Activated CD4-positive, alpha-beta memory T cell treated with anti-CD3 and anti-CD28 coated beads for 36 hours (primary cell): ENCODE measurements at regions of chr14 and their contacts with region 1.

Region 1: DNA sequence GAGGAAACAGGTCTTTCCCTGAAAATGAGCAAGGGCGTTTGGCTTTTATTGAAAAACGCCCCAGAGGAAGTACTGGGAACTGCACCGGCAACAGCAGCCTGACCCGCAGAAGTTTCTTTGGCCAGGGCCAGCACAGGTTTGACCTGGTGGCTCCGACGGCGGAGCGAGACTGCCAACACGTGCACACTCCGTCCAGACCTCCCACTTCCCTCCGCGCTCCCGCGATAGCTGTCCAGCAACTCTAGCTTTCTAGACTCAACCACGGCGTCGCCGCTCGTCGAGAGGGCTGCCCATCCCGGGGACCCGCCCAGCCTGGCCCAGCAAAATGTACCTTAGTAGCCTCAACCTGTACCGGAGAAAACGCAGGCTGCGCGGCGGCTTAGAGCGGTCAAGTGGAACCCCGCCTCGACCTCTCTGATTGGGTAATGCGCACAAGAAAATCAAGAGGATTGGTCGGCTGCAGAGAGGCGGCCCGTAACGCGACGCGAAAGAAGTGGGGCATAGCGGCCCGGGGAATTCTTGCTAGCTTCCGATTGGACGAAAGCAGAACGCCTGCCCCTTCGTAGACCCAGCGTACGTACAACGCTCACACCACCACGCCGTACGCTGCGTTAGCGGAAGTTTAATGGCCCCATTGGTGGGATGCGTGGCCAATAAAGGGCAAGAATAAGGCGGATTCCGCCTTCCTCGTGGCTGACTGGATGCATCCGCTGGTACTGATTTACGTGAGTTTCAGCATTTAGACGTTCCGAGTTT is at the start of gene WDR89:
- DNase-seq: peak; percentile 98
- H3K4me3 Mint-ChIP-seq: peak within 1 kb of the TSS; percentile 74
- H3K27ac Mint-ChIP-seq: peak within 1 kb of the TSS; percentile 89
- H3K4me1 Mint-ChIP-seq: peaks cover 43% of the 10 kb centered on the region
- H3K27me3 Mint-ChIP-seq: no peaks in the 10 kb centered on the region
- total RNA-seq, gene WDR89: 27.3 to 30.4 TPM

Region 2: DNA sequence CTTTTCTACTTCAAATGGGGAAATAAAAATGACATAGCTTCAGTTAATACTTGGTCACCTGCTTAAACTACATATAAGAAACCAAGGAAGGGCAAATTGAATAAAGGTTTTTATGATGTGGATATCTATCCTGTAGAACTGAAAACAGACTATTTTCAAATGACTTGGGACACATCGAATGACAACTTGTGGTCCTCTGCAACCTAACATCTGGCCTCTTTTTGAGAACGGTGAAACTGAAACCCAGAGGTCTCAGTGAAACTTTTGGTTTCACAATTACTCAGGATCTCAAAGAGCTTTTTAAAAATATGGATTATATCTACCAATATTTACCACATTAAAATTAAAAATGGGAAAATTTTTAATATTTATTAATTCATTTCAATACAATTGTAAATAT is 163.6 kb before region 1 on chr14:
- CTCF ChIA-PET with region 1: no interaction called
- POLR2A ChIA-PET with region 1: no interaction called
- intact Hi-C with region 1: loop called (anchors 1 kb)
- DNase-seq: peak; percentile 38
- H3K4me3 Mint-ChIP-seq: peak overlapping the region; percentile 5
- H3K27ac Mint-ChIP-seq: no peak overlapping the region
- H3K4me1 Mint-ChIP-seq: peaks cover 45% of the 10 kb centered on the region
- H3K27me3 Mint-ChIP-seq: no peaks in the 10 kb centered on the region

Region 3: GRCh38 chr14:63578300-63578699 is 63.4 kb before region 1 on chr14:
- CTCF ChIA-PET with region 1: no interaction called
- POLR2A ChIA-PET with region 1: no interaction called
- intact Hi-C with region 1: no loop called
- DNase-seq: no peak
- H3K4me3 Mint-ChIP-seq: no peak overlapping the region
- H3K27ac Mint-ChIP-seq: no peak overlapping the region
- H3K4me1 Mint-ChIP-seq: no peaks in the 10 kb centered on the region
- H3K27me3 Mint-ChIP-seq: peaks cover 2% of the 10 kb centered on the region

Region 4: GRCh38 chr14:63713765-63714164 is 72.1 kb after region 1 on chr14:
- CTCF ChIA-PET with region 1: no interaction called
- POLR2A ChIA-PET with region 1: interaction called, 5 read pairs
- intact Hi-C with region 1: loop called (anchors 5 kb)
- DNase-seq: no peak
- H3K4me3 Mint-ChIP-seq: no peak overlapping the region
- H3K27ac Mint-ChIP-seq: no peak overlapping the region
- H3K4me1 Mint-ChIP-seq: peaks cover 20% of the 10 kb centered on the region
- H3K27me3 Mint-ChIP-seq: no peaks in the 10 kb centered on the region

Region 5: DNA sequence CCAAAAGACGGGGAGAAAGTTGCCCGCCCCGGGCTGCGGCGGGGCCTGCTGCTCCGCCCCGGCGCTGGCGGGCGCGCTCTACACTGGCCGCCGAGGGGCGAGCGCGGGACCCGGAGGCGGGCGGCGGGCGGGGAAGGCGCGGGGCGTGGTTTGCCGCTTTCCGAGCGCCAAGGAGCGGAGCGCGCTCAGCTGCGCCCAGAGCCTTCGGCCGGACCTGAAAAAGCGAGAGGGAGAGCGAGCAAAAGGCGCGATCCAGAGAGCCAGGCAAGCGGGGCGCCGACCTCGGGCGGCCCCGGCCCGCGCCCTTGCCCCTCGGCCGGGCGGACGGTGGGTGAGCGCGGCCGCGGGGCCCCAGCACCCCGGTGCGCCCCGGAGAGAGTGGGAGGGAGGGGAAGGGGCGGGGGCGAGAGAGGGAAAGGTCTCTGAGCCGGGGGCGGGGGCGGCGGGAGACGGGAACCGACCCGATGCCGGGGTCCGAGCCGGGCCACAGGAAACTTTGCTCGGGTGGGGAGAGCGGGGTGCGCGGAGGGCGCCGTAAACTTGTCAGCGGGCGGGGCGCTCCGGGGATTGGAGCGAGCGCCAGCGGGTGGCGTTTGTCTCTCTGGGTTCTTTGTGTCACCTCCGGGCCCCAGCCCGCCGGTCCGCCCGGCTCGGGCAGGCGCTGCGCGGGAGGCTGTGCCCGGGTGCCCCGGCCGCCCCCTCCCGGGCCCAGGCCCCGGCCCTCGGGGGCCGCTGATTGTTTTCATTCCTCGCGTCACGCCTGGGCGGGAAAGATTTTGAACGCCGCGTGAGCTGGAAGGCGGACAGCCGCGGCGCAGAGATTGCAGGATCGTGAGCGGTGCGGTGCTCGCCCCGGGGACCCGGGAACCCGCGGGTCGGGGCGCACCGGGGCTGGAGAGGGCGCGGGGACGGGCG is 211.4 kb after region 1 on chr14 and contains the start of gene SYNE2:
- CTCF ChIA-PET with region 1: no interaction called
- POLR2A ChIA-PET with region 1: interaction called, 3 read pairs
- intact Hi-C with region 1: loop called (anchors 5 kb)
- DNase-seq: peak; percentile 87
- H3K4me3 Mint-ChIP-seq: peak within 1 kb of the TSS; percentile 89
- H3K27ac Mint-ChIP-seq: peak within 1 kb of the TSS; percentile 86
- H3K4me1 Mint-ChIP-seq: peaks cover 39% of the 10 kb centered on the region
- H3K27me3 Mint-ChIP-seq: no peaks in the 10 kb centered on the region
- total RNA-seq, gene SYNE2: 27.6 to 27.7 TPM

Region 6: GRCh38 chr14:63893701-63894458 is 252.2 kb after region 1 on chr14:
- CTCF ChIA-PET with region 1: no interaction called
- POLR2A ChIA-PET with region 1: no interaction called
- intact Hi-C with region 1: no loop called
- DNase-seq: no peak
- H3K4me3 Mint-ChIP-seq: no peak overlapping the region
- H3K27ac Mint-ChIP-seq: no peak overlapping the region
- H3K4me1 Mint-ChIP-seq: peaks cover 28% of the 10 kb centered on the region
- H3K27me3 Mint-ChIP-seq: no peaks in the 10 kb centered on the region

Region 7: GRCh38 chr14:64387694-64388532 is 746.3 kb after region 1 on chr14 and contains the start of gene MTHFD1:
- CTCF ChIA-PET with region 1: no interaction called
- POLR2A ChIA-PET with region 1: no interaction called
- intact Hi-C with region 1: loop called (anchors 5 kb)
- DNase-seq: peak; percentile 98
- H3K4me3 Mint-ChIP-seq: peak within 1 kb of the TSS; percentile 99
- H3K27ac Mint-ChIP-seq: peak within 1 kb of the TSS; percentile 95
- H3K4me1 Mint-ChIP-seq: peaks cover 33% of the 10 kb centered on the region
- H3K27me3 Mint-ChIP-seq: peaks cover 3% of the 10 kb centered on the region
- total RNA-seq, gene MTHFD1: 212 to 221 TPM

Region 8: DNA sequence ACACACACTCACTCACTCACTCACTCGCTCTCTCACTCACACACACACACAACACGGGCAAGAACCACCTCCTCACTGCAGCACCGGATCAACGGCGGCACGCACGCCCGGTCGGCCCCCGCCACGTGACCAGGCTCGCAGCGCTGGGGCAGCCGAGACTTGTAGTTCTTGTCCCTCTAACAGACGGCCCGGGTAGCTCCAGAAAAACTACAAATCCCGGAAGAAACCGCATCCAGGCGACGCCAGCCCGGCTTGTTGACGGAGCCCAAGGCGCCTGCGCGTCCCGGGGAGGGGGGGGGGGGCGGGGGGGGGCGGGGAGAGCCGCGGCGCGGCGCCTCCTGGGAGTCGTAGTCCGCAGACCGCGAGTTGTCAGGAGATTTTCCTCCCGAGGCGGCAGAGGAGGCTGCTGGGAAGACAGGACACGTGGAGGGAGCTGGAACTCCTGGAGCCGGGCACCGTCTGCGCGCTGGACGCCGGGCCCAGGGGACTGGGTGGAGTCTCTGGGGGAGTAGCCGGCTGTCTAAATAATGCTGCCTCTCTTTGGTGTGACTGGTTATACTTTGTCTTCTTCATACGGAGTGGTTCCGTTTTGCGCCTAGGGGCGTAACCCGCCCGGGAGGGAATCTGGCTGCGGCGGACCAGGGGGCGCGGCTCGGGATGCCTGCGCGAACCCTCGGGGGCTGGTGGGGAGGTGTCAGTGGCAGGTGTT is 1460.9 kb after region 1 on chr14 and contains the start of gene MAX:
- CTCF ChIA-PET with region 1: no interaction called
- POLR2A ChIA-PET with region 1: no interaction called
- intact Hi-C with region 1: loop called (anchors 5 kb)
- DNase-seq: peak; percentile 99
- H3K4me3 Mint-ChIP-seq: peak within 1 kb of the TSS; percentile 96
- H3K27ac Mint-ChIP-seq: peak within 1 kb of the TSS; percentile 93
- H3K4me1 Mint-ChIP-seq: peaks cover 34% of the 10 kb centered on the region
- H3K27me3 Mint-ChIP-seq: no peaks in the 10 kb centered on the region
- total RNA-seq, gene MAX: 74.5 to 80.7 TPM